Activated CD8-positive, alpha-beta T cell treated with anti-CD3 and anti-CD28 coated beads for 36 hours (primary cell): ENCODE measurements at regions of chr4 and their contacts with region 1.

Region 1: GRCh38 chr4:4334798-4335520 is 44.9 kb downstream of the ZBTB49 start:
- DNase-seq: peak; percentile 87
- ATAC-seq: peak; percentile 99
- H3K4me3 Mint-ChIP-seq: no peak overlapping the region
- H3K27ac Mint-ChIP-seq: no peak overlapping the region
- H3K4me1 Mint-ChIP-seq: peaks cover 7% of the 10 kb centered on the region
- H3K27me3 Mint-ChIP-seq: no peaks in the 10 kb centered on the region
- CTCF ChIP-seq: peak; percentile 63

Region 2: GRCh38 chr4:3531879-3532713 is 802.9 kb before region 1 on chr4 and contains the start of gene LRPAP1:
- CTCF ChIA-PET with region 1: no interaction called
- POLR2A ChIA-PET with region 1: no interaction called
- intact Hi-C with region 1: no loop called
- DNase-seq: peak; percentile 86
- ATAC-seq: peak; percentile 97
- H3K4me3 Mint-ChIP-seq: peak within 1 kb of the TSS; percentile 100
- H3K27ac Mint-ChIP-seq: peak within 1 kb of the TSS; percentile 96
- H3K4me1 Mint-ChIP-seq: peaks cover 30% of the 10 kb centered on the region
- H3K27me3 Mint-ChIP-seq: no peaks in the 10 kb centered on the region
- CTCF ChIP-seq: no peak
- total RNA-seq, gene LRPAP1: 46.0 to 49.8 TPM

Region 3: GRCh38 chr4:4248029-4248884 is 86.7 kb before region 1 on chr4 and contains the start of gene TMEM128:
- CTCF ChIA-PET with region 1: interaction called, 18 read pairs
- POLR2A ChIA-PET with region 1: interaction called, 3 read pairs
- intact Hi-C with region 1: loop called (anchors 2 kb)
- DNase-seq: peak; percentile 95
- ATAC-seq: peak; percentile 98
- H3K4me3 Mint-ChIP-seq: peak within 1 kb of the TSS; percentile 98
- H3K27ac Mint-ChIP-seq: peak within 1 kb of the TSS; percentile 98
- H3K4me1 Mint-ChIP-seq: peaks cover 25% of the 10 kb centered on the region
- H3K27me3 Mint-ChIP-seq: no peaks in the 10 kb centered on the region
- CTCF ChIP-seq: peak; percentile 16
- total RNA-seq, gene TMEM128: 19.4 to 20.6 TPM

Region 4: GRCh38 chr4:4289941-4290850 is 44.8 kb before region 1 on chr4 and contains the starts of genes LYAR and ZBTB49:
- CTCF ChIA-PET with region 1: no interaction called
- POLR2A ChIA-PET with region 1: no interaction called
- intact Hi-C with region 1: loop called (anchors 2 kb)
- DNase-seq: peak; percentile 96
- ATAC-seq: peak; percentile 93
- H3K4me3 Mint-ChIP-seq: peak within 1 kb of the TSS; percentile 94
- H3K27ac Mint-ChIP-seq: peak within 1 kb of the TSS; percentile 89
- H3K4me1 Mint-ChIP-seq: peaks cover 45% of the 10 kb centered on the region
- H3K27me3 Mint-ChIP-seq: no peaks in the 10 kb centered on the region
- CTCF ChIP-seq: no peak
- total RNA-seq, gene LYAR: 69.4 to 78.4 TPM
- total RNA-seq, gene ZBTB49: 4.8 to 6.3 TPM